ENCODE measurements at regions of chr4 and their contacts with region 1.

Region 1: DNA sequence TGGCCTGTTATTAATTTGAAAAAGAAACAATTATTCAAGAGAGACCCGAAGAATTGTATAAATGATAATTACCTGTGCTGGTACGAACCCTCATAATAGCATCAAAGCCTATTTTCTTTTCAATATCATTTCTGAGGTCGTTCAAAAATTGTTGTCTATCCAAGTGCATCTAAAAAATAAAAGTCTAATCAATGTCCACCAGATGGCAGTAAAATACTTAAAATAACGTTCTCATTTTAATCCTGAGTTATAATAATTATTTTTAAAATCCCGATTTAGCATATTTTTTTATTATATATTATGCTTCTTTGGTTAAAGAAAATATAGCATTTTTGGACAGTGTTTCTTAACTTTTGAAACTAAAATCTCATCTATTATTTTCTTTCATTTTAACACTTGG is 55.7 kb downstream of the METTL14 start:
- DNase-seq: peak in 3 of 5 donors; percentile 2 to 13 (median 10)
- H3K4me3 ChIP-seq: no peak overlapping the region
- H3K4me3 Mint-ChIP-seq: no peak overlapping the region
- H3K27ac ChIP-seq: no peak overlapping the region
- H3K27ac Mint-ChIP-seq: no peak overlapping the region
- H3K4me1 ChIP-seq: no peaks in the 10 kb centered on the region
- H3K4me1 Mint-ChIP-seq: no peaks in the 10 kb centered on the region
- H3K27me3 ChIP-seq: no peaks in the 10 kb centered on the region
- H3K27me3 Mint-ChIP-seq: no peaks in the 10 kb centered on the region

Region 2: GRCh38 chr4:118888666-118889311 is 147.9 kb after region 1 on chr4 and contains the start of gene SYNPO2:
- CTCF ChIA-PET with region 1: interaction called, 3 read pairs
- POLR2A ChIA-PET with region 1: no interaction called
- intact Hi-C with region 1: loop called (anchors 1 kb)
- DNase-seq: peak in 4 of 5 donors; percentile 6 to 23 (median 20)
- H3K4me3 ChIP-seq: peak within 1 kb of the TSS in 1 of 2 donors; percentile 23
- H3K4me3 Mint-ChIP-seq: peak within 1 kb of the TSS; percentile 72 to 85 (median 83)
- H3K27ac ChIP-seq: no peak within 1 kb of the TSS
- H3K27ac Mint-ChIP-seq: no peak within 1 kb of the TSS
- H3K4me1 ChIP-seq: peaks cover 15% of the 10 kb centered on the region
- H3K4me1 Mint-ChIP-seq: peaks cover 12 to 16% (median 14%) of the 10 kb centered on the region in 4 donors
- H3K27me3 ChIP-seq: peaks cover 9% of the 10 kb centered on the region
- H3K27me3 Mint-ChIP-seq: peaks cover 19 to 23% of the 10 kb centered on the region in 2 donors
- total RNA-seq, gene SYNPO2: 1.3 to 1.4 TPM

Measured in CD4-positive, alpha-beta memory T cell (primary cell).